ENCODE measurements at regions of chr1 and their contacts with region 1.

Region 1: DNA sequence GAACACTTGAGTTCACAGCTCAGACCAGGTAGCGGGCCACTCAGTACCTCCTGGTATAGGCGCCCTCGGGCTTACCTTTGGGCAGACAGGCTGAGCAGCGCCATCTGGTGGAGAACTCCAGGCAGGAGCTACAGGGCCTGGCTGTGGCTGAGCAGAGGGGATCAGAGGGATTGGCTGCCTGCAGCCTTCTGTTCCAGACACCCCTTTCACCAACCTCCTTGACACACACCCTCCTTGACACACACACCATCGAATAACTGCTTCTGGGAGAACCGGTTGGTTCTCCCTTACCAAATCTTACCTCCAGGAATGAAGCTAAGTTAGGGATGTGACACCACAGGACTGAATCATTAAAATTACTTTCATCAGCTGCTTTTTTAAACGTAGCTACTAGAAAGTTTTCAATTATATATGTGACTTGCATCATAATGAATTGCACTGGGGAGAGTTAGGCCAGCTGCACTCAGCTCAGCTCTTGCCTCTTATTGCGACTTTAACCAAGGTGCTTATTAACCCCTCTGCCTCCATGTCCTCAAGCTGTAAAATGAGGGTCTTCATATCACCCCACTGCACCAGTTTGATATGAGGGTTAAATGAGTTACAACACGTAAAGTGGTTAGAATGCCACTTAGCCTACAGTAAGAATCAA is 6.6 kb downstream of the LIN28A start:
- DNase-seq: peak; percentile 85 to 94
- H3K4me3 ChIP-seq: peak overlapping the region in 2 of 4 experiments; percentile 11 to 52; a peak in 4 of 8 replicates
- H3K27ac ChIP-seq: peak overlapping the region; percentile 63; the same call in 1 of the 2 replicates
- H3K4me1 ChIP-seq: peaks cover 24 to 47% (median 35%) of the 10 kb centered on the region in 4 experiments
- H3K27me3 ChIP-seq: no peaks in the 10 kb centered on the region
- CTCF ChIP-seq: peak; percentile 92 to 98 (median 96)
- EP300 ChIP-seq: no peak; a peak in 1 of 3 replicates
- POLR2A ChIP-seq: peak in 1 of 2 experiments; percentile 58; a peak in 1 of 3 replicates
- RAD21 ChIP-seq: peak; percentile 79 to 90

Region 2: GRCh38 chr1:26321315-26322041 is 95.8 kb before region 1 on chr1:
- CTCF ChIA-PET with region 1: interaction called, 6 read pairs
- POLR2A ChIA-PET with region 1: interaction called, 15 read pairs
- DNase-seq: peak; percentile 64 to 100
- H3K4me3 ChIP-seq: no peak overlapping the region
- H3K27ac ChIP-seq: no peak overlapping the region
- H3K4me1 ChIP-seq: peaks cover 4 to 8% (median 6%) of the 10 kb centered on the region in 4 experiments
- H3K27me3 ChIP-seq: no peaks in the 10 kb centered on the region
- CTCF ChIP-seq: peak; percentile 83 to 97 (median 92)
- EP300 ChIP-seq: no peak
- POLR2A ChIP-seq: no peak
- RAD21 ChIP-seq: peak; percentile 96 to 98

Region 3: GRCh38 chr1:26372039-26372438 is 45.2 kb before region 1 on chr1:
- CTCF ChIA-PET with region 1: interaction called, 13 read pairs
- POLR2A ChIA-PET with region 1: interaction called, 15 read pairs
- DNase-seq: no peak
- H3K4me3 ChIP-seq: no peak overlapping the region
- H3K27ac ChIP-seq: no peak overlapping the region
- H3K4me1 ChIP-seq: peaks cover 0 to 2% (median 0%) of the 10 kb centered on the region in 4 experiments; a peak in 3 of 7 replicates
- H3K27me3 ChIP-seq: no peaks in the 10 kb centered on the region
- CTCF ChIP-seq: no peak
- EP300 ChIP-seq: no peak
- POLR2A ChIP-seq: no peak
- RAD21 ChIP-seq: no peak

Region 4: DNA sequence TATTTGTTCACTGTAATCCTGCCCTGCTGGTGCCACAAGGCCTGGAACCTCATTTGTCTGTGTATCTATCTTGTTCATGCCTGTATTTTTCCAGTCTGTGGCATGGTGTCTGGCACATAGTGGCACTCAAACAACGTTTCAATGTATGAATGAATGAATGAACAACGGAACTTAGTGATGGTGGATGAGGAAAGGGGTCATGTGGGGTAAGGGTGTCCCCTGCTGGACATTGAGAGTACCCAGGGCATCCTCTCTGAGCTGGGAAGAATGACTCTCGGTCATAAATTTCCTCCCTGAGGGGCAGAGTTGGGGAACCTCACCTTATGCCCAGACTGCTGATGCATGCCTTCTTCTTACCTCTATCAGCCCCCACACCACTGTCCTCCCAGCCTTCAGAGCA is 25.8 kb before region 1 on chr1:
- CTCF ChIA-PET with region 1: interaction called, 17 read pairs
- POLR2A ChIA-PET with region 1: interaction called, 166 read pairs
- DNase-seq: no peak
- H3K4me3 ChIP-seq: no peak overlapping the region
- H3K27ac ChIP-seq: no peak overlapping the region
- H3K4me1 ChIP-seq: peaks cover 1 to 10% (median 3%) of the 10 kb centered on the region in 4 experiments; a peak in 6 of 7 replicates
- H3K27me3 ChIP-seq: no peaks in the 10 kb centered on the region
- CTCF ChIP-seq: peak; percentile 81 to 93 (median 83)
- EP300 ChIP-seq: no peak
- POLR2A ChIP-seq: no peak
- RAD21 ChIP-seq: peak; percentile 94

Region 5: GRCh38 chr1:26431979-26432695 is 14.9 kb after region 1 on chr1 and contains the start of gene DHDDS:
- CTCF ChIA-PET with region 1: interaction called, 7 read pairs
- POLR2A ChIA-PET with region 1: interaction called, 175 read pairs
- DNase-seq: peak; percentile 95 to 99
- H3K4me3 ChIP-seq: peak within 1 kb of the TSS; percentile 62 to 86 (median 83)
- H3K27ac ChIP-seq: peak within 1 kb of the TSS; percentile 53
- H3K4me1 ChIP-seq: peaks cover 2 to 8% (median 5%) of the 10 kb centered on the region in 4 experiments; a peak in 6 of 7 replicates
- H3K27me3 ChIP-seq: no peaks in the 10 kb centered on the region
- CTCF ChIP-seq: no peak
- EP300 ChIP-seq: peak in 1 of 2 experiments; percentile 90; a peak in 2 of 3 replicates
- POLR2A ChIP-seq: peak; percentile 38 to 42; a peak in 2 of 3 replicates
- RAD21 ChIP-seq: no peak
- total RNA-seq, gene DHDDS: 44.6 and 48.0 TPM in 2 replicates

Measured in H1 (cell line).